IMR-90 (cell line): ENCODE measurements at regions of chr2 and their contacts with region 1.

Region 1: GRCh38 chr2:28406276-28407096 is 13.8 kb downstream of the FOSL2 start:
- DNase-seq: peak; percentile 51
- ATAC-seq: peak; percentile 14; the same call in 1 of the 2 replicates
- H3K4me3 ChIP-seq: no peak overlapping the region
- H3K27ac ChIP-seq: peak overlapping the region; percentile 12; the same call in 1 of the 2 replicates
- H3K4me1 ChIP-seq: peaks cover 39% of the 10 kb centered on the region
- H3K27me3 ChIP-seq: no peaks in the 10 kb centered on the region
- CTCF ChIP-seq: no peak
- POLR2A ChIP-seq: no peak
- RAD21 ChIP-seq: no peak

Region 2: DNA sequence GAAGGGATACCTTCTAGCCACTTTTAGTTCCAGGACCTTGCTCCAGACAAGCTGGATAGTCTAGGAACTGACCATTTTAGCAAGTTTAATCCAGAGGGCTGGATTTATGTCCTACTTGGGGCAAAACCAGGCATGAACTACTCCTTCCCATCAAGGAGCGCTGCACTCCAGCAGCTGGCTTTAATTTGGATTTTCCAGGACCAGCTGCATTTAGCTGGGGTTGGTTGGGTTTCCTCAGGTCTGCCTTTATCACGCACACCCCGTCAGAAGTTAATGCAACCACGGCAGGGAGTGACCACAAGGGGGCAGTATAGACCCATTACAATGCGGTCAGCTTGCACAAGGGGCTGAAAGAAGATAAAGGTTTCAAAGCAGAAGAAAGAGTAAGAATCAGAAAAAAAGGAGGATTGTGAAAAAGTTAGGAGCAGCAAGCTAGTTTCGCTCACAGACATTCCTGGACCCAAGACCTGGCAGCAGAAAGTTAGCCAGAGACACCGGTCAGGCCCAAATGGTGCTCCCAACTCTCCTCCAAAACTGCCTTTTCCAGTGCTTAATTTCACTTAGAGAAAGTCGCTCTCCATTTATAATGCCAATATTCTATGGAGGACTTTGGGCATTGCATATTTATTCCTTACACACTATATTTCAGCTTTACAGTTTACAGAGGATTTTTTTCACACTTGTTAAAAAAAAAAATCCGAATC is 702.7 kb before region 1 on chr2:
- CTCF ChIA-PET with region 1: no interaction called
- POLR2A ChIA-PET with region 1: no interaction called
- dilution Hi-C with region 1: no loop called
- in situ Hi-C with region 1: loop called (anchors 5 kb)
- intact Hi-C with region 1: no loop called
- DNase-seq: peak; percentile 96
- ATAC-seq: peak; percentile 70
- H3K4me3 ChIP-seq: no peak overlapping the region
- H3K27ac ChIP-seq: peak overlapping the region; percentile 35; the same call in 1 of the 2 replicates
- H3K4me1 ChIP-seq: peaks cover 18% of the 10 kb centered on the region
- H3K27me3 ChIP-seq: no peaks in the 10 kb centered on the region
- CTCF ChIP-seq: peak; percentile 96
- POLR2A ChIP-seq: no peak
- RAD21 ChIP-seq: peak; percentile 93

Region 3: GRCh38 chr2:28755421-28755820 is 348.9 kb after region 1 on chr2:
- CTCF ChIA-PET with region 1: no interaction called
- POLR2A ChIA-PET with region 1: no interaction called
- dilution Hi-C with region 1: no loop called
- in situ Hi-C with region 1: no loop called
- intact Hi-C with region 1: no loop called
- DNase-seq: peak; percentile 54
- ATAC-seq: no peak
- H3K4me3 ChIP-seq: no peak overlapping the region
- H3K27ac ChIP-seq: no peak overlapping the region
- H3K4me1 ChIP-seq: peaks cover 14% of the 10 kb centered on the region
- H3K27me3 ChIP-seq: no peaks in the 10 kb centered on the region
- CTCF ChIP-seq: no peak
- POLR2A ChIP-seq: no peak
- RAD21 ChIP-seq: no peak